Esophagus muscularis mucosa (tissue), 4 donors: ENCODE measurements at regions of chr14 and their contacts with region 1.

Region 1: DNA sequence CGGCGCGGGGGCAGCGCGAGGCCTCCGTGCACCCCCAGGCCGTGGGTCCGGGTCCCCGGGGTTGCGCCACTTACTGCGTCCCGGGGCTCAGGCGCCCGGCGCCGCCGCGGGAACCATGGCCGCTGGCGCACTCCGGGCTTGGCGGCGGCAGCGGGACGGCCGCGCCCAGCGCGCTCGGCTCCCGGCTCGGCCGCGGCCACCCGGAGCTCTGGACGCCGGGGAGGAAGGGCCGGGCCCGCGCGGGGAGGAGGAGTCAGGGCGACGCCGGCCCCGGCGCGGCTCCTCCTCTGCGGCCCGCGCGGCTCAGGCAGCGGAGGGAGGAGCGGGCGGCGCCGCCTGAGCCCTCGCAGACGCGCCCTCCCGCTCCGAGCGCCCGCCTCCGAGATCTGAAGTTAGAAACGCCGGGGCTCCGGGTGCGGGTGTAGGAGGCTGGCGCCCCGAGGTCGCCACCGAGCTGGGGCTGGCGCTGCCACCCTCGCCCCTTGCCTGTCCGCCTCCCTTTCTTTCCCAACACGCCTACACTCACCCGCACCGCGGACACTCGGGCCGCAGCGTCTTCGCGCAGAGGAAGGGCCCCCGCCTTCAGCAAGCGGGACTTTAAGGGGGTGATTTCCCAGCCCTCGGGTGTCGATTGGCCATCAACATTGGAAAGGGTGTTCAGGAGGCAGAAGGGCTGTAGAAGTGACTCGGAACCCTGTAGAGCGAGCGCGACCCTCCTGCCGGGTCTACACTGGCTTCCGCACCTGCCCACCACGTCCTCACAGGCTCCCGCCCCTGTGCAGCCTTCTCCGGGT is at the start of gene NIN:
- DNase-seq: peak; percentile 91
- H3K4me3 ChIP-seq: peak within 1 kb of the TSS; percentile 90 to 96 (median 94)
- H3K27ac ChIP-seq: peak within 1 kb of the TSS; percentile 91 to 94 (median 92)
- H3K4me1 ChIP-seq: peaks cover 12 to 34% (median 28%) of the 10 kb centered on the region in 4 donors
- H3K27me3 ChIP-seq: no peaks in the 10 kb centered on the region
- CTCF ChIP-seq: no peak
- EP300 ChIP-seq: no peak
- POLR2A ChIP-seq: no peak
- total RNA-seq, gene NIN: 26.2 to 38.8 (median 34.1) TPM

Region 2: DNA sequence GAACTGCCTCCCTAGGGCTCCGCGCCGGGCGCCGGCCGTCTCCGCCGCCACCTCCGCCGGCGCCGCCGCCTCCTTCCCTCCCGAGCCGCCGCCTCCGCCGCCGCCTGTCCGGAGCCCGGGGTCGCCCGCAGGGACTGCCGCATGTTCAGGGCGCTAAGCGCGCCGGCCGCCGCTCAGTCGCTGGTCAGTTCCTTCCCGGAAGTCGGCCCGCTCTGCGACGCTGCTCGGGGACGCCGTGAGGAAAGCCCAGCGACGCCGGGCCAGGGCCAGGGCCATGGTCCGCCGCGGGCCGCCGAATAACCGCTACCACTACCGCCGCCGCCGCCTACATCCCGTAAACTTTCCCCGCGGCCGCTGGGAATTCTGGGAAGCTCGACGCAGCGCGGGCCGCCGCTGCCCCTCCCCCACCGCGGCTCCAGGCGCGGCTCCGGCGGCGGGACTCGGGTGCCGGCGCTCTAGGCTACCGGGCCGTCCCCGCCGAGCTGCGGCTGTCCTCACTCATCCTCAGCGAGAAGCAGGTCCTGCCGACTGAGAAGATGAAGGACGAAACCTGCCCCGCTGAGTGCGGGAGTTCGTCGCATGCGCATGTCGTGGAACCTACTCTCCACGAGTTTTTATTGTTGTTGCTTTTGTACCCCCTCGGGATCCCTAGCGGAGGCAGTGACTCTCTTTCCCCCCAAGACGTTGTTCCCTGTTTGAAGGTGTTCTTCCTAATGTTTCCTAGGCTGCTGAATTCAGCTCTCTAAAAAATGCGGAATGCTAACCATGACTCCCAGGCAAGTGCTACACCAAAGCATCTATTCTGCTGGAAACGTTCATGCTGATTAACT is 162.9 kb before region 1 on chr14 and contains the start of gene SAV1:
- intact Hi-C with region 1: loop called (anchors 5 kb)
- DNase-seq: peak; percentile 96
- H3K4me3 ChIP-seq: peak within 1 kb of the TSS; percentile 80 to 94 (median 86)
- H3K27ac ChIP-seq: peak within 1 kb of the TSS; percentile 96 to 100 (median 98)
- H3K4me1 ChIP-seq: peaks cover 7 to 41% (median 30%) of the 10 kb centered on the region in 4 donors
- H3K27me3 ChIP-seq: no peaks in the 10 kb centered on the region
- CTCF ChIP-seq: no peak
- EP300 ChIP-seq: no peak
- POLR2A ChIP-seq: peak; percentile 74
- total RNA-seq, gene SAV1: 34.5 to 48.5 (median 40.2) TPM

Region 3: GRCh38 chr14:51104467-51104866 is 273.3 kb after region 1 on chr14:
- intact Hi-C with region 1: no loop called
- DNase-seq: no peak
- H3K4me3 ChIP-seq: no peak overlapping the region
- H3K27ac ChIP-seq: no peak overlapping the region
- H3K4me1 ChIP-seq: no peaks in the 10 kb centered on the region
- H3K27me3 ChIP-seq: peaks cover 0 to 28% (median 0%) of the 10 kb centered on the region in 4 donors
- CTCF ChIP-seq: no peak
- EP300 ChIP-seq: no peak
- POLR2A ChIP-seq: no peak